MCF 10A (cell line): ENCODE measurements at regions of chr12 and their contacts with region 1.

Region 1: DNA sequence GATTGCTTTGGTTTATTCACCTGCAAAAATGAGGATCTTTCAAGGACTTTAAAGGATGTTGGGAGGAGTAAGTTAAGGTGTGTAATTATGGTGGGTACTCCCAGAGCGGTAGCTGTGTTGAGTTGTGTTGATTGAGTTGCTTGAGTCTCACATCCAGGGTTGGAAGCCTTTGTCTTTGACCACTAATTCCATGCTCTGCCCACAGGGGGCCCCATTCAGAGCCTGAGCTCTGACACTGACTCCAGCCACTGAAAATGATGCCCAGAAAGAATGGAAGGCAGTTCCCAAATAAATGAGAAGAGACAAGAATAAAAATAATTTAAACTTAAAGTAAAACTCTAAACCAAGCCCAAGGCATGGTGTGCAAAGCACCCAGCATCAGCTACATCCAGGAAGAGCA is 237.4 kb upstream of the PWP1 start:
- DNase-seq: peak; percentile 35
- H3K4me3 Mint-ChIP-seq: no peak overlapping the region
- H3K27ac Mint-ChIP-seq: no peak overlapping the region
- H3K4me1 Mint-ChIP-seq: no peaks in the 10 kb centered on the region
- H3K27me3 Mint-ChIP-seq: no peaks in the 10 kb centered on the region
- CTCF ChIP-seq: no peak

Region 2: DNA sequence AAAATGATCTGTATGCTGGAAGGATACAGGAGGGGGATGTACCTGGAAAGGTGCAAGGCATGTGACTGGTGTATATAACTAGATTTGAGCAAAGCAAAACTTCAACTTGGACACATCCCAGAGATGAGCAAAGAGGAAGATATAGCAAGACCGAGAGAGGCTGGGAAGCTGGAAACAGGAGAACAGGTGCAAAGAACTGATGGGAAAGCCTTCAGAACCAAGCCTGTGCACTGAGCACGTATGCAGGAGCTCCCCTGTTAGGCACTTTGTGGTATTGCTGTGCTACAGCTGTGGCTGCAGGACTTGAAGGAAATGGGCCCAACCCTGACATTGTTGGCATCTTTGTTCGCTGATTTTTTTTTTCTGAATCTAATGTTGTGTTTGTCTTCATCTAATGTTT is 116.7 kb after region 1 on chr12:
- CTCF ChIA-PET with region 1: no interaction called
- POLR2A ChIA-PET with region 1: no interaction called
- intact Hi-C with region 1: loop called (anchors 5 kb)
- DNase-seq: peak; percentile 43
- H3K4me3 Mint-ChIP-seq: no peak overlapping the region
- H3K27ac Mint-ChIP-seq: no peak overlapping the region
- H3K4me1 Mint-ChIP-seq: peaks cover 8% of the 10 kb centered on the region
- H3K27me3 Mint-ChIP-seq: no peaks in the 10 kb centered on the region
- CTCF ChIP-seq: peak; percentile 38